Activated CD4-positive, alpha-beta T cell treated with anti-CD3 and anti-CD28 coated beads, Interleukin-2, amount 10 ng/mL, durations not matched to agents 24 days and 14 days (primary cell): ENCODE measurements at regions of chr7 and their contacts with region 1.

Region 1: GRCh38 chr7:3106361-3106826 is 62.7 kb upstream of the CARD11 start:
- DNase-seq: peak; percentile 83
- H3K4me3 Mint-ChIP-seq: peak overlapping the region; percentile 57
- H3K27ac Mint-ChIP-seq: peak overlapping the region; percentile 92
- H3K4me1 Mint-ChIP-seq: peaks cover 71% of the 10 kb centered on the region
- H3K27me3 Mint-ChIP-seq: no peaks in the 10 kb centered on the region

Region 2: DNA sequence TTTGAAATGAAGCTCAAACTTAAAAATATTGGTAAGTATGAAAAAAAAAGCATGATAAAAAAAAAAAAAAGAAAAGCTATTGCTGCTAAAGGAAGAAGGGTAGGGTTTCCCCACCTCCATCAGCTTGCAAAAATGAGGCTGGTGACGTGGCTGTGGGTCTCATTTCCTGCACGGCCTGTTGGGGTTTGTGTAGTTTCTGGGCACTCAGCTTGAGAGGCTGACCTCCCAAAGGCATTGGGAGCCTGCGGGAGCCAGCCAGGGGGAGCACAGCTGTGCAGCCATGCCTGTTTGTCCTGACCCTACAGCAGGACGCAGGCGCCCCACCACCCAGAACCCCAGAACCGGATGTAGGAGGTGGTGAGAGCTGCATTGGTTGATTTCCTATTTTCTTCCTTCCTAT is 13.9 kb before region 1 on chr7:
- intact Hi-C with region 1: loop called (anchors 1 kb)
- DNase-seq: peak; percentile 93
- H3K4me3 Mint-ChIP-seq: peak overlapping the region; percentile 22
- H3K27ac Mint-ChIP-seq: peak overlapping the region; percentile 86
- H3K4me1 Mint-ChIP-seq: peaks cover 51% of the 10 kb centered on the region
- H3K27me3 Mint-ChIP-seq: no peaks in the 10 kb centered on the region